Activated CD8-positive, alpha-beta memory T cell treated with anti-CD3 and anti-CD28 coated beads, Interleukin-2, amount 10 ng/mL, durations not matched to agents 7 days and 5 days (primary cell): ENCODE measurements at regions of chr3 and their contacts with region 1.

Region 1: GRCh38 chr3:160707187-160707794 is 30.3 kb downstream of the ARL14 start:
- DNase-seq: peak; percentile 45
- ATAC-seq: peak; percentile 42
- H3K4me3 Mint-ChIP-seq: no peak overlapping the region
- H3K27ac Mint-ChIP-seq: no peak overlapping the region
- H3K4me1 Mint-ChIP-seq: no peaks in the 10 kb centered on the region
- H3K27me3 Mint-ChIP-seq: peaks cover 54% of the 10 kb centered on the region

Region 2: DNA sequence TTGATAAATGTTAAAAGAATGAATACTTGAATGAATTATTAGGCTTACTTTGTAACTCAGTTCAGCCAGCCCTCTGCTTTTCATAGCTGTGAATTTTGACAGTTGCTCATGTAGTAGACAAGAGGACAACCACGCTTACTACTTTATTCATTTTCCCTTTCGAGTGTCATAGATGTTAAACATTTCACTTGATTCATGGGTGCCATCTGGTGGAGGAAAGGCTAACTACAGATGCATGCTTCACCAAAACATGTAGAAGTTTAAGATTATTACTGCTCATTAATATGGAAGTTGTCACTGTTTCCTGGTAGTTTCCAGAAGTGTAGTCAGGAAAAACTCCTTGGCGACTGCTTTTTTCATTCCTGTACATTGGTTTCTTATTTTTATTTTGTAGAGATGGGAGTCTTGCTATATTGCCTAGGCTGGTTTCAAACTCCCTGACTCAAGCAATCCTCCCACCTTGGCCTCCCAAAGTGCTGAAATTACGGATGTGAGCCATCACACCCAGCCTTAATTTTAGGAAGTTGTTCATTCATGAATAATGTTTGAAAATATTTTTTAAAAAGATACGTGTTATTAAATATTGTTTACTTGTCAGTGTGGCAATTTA is 234.7 kb after region 1 on chr3:
- CTCF ChIA-PET with region 1: interaction called, 13 read pairs
- DNase-seq: peak; percentile 77
- ATAC-seq: peak; percentile 51
- H3K4me3 Mint-ChIP-seq: no peak overlapping the region
- H3K27ac Mint-ChIP-seq: no peak overlapping the region
- H3K4me1 Mint-ChIP-seq: no peaks in the 10 kb centered on the region
- H3K27me3 Mint-ChIP-seq: no peaks in the 10 kb centered on the region